ENCODE measurements at regions of chr11 and their contacts with region 1.

Region 1: GRCh38 chr11:69704508-69705253 is 859 bp upstream of the FGF19 start:
- DNase-seq: no peak
- H3K4me3 ChIP-seq: no peak overlapping the region
- CTCF ChIP-seq: no peak
- POLR2A ChIP-seq: no peak

Region 2: DNA sequence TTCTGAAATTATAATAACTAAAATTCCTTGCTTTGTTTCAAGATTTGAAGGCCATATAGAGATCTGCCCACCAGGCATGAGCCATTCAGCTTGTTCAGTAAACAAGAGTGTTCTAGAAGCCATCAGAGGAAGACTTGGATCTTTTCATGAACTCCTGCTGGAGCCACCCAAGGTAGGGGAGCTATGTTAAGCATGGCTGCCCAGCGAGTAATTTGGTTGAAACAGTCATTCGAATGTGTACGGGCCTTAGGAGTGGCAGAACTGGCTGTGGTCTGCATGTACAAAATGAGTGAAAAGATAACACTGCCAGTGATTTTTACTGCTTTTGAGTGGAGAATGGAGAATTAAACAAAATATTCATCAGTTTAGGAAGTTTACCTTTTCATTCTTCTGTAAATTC is 1140.4 kb before region 1 on chr11:
- intact Hi-C with region 1: no loop called
- DNase-seq: no peak
- H3K4me3 ChIP-seq: no peak overlapping the region
- CTCF ChIP-seq: no peak
- POLR2A ChIP-seq: no peak

Region 3: DNA sequence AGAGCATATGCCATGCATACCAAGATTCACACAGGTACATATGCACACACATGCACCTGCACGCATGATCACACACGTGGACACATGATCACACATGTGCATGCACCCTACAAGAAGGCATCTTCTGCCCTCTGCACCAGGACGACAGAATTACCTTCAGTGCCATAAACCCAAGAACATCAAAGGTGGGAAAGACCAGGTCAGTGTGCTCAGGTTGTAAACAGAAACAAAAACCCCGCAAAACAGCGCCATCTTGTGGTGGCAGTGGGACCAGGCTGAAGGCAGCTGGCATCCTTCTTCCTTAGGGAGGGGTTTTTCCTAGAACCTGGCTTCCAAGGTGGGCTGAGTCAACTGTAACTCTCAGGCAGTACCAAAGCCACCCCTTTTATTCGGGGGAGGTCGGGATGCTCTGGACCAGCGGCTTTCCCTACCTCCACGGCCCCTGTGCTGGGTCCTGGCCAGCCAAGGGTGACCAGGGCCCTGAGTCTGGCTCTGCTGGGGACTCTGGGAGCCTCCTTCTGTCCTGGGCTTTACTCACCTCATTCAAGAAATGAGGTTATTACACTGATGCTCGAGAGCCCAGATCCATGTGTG is 183.9 kb after region 1 on chr11:
- intact Hi-C with region 1: loop called (anchors 10 kb)
- DNase-seq: peak; percentile 35 to 92
- H3K4me3 ChIP-seq: no peak overlapping the region
- CTCF ChIP-seq: no peak
- POLR2A ChIP-seq: no peak

Measured in lower leg skin (tissue), 4 donors.